Left ventricle myocardium superior (tissue), 1 donor: ENCODE measurements at regions of chr7 and their contacts with region 1.

Region 1: DNA sequence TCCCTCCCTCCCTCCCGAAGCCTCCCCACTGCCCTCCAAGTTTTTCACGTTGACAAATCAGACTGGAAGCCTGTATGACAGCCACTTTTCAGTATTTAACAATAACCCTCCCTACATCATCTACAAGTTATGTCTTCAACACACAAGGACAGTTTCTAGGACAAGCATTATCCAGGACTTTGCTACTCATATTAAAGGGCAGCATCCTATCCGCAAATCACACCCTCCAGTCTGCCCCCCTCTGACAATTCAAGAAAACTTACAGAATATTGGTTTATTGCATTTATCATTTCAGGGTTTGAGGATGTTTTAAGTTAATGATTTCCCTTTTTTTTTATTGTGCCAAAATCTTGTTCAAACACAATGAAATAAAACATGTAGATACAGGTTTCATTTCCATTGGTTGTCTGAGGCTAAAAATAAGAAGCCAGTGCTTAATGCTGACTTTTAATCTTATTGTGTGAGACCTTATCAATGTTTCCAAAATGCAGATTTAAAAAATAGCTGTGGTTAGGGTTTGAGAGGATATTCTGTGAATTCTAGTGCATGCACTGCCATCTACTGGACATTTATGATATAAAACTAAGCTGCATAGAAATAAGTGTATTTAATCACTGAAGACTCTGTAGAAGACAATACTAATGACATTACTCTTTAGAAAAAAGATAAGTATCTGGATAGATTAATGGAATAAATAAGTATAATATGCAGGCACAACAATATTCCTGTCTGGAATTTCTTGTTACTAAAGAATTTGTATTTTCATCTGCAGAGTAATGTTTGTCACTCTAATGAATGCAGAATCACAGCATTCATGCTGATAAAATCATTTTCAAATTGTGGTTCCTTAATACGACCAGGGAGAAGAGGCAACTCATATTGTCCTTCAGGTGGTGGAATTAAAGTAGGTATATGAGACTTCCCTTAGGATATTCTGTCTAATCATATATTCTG is 64.1 kb downstream of the CAV1 start:
- DNase-seq: no peak
- ATAC-seq: peak; percentile 50

Region 2: DNA sequence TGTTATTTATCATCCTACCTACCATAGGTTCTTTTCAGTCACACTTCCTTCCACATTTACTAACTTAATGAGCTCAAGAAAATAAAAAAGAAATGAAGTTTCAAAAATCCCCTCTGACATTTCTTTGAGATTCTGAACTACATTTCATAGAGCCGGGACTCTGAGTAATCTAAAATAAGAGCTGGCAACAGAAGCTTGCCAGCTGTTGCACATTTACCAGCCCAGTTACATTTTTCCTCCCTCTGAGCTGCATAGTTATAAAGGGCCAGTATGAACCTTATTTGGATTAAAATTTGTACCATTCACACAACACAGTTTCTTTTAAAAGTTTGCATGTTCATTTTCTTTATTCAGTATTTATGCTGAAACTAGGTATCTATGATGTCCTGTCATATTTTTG is 208.9 kb before region 1 on chr7:
- intact Hi-C with region 1: no loop called
- DNase-seq: no peak
- ATAC-seq: peak; percentile 74

Region 3: GRCh38 chr7:116534790-116535189 is 54.1 kb before region 1 on chr7:
- intact Hi-C with region 1: loop called (anchors 10 kb)
- DNase-seq: no peak
- ATAC-seq: peak; percentile 36

Region 4: GRCh38 chr7:116809636-116810266 is 220.8 kb after region 1 on chr7:
- intact Hi-C with region 1: loop called (anchors 2 kb)
- DNase-seq: no peak
- ATAC-seq: peak; percentile 71